ENCODE measurements at regions of chr5 and their contacts with region 1.

Region 1: DNA sequence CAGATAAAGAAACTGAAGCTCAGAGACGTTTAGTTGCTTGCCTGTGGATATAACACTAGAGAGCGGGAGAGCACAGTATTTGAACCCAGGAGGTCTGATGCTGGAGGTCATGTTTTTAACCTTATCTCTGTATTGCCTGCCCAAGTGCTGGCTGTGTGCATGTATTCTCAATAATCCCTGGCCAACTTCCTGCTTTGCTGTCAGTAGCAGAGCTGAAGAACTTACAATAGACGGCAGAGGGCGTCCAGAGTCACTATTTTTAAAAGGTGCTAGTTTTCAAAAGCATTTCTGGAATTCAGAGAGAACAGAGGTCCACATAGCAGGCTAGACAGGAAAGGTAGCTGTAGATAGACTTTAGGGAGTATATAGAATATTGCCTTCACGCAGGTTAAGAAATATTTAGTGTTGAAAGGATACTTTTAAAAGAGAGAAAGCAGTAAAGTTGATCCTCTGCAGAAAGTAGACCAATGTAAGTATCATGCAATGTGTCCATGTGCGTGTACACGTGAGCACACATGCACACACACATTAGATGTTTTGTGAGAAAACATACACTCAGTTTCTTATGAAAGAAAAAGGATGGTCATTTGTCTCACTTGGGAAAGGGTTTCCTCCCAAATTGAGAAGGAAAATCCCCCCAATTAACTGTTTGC is 46.3 kb downstream of the PTCD2 start:
- DNase-seq: peak; percentile 54
- ATAC-seq: peak; percentile 47
- H3K4me3 Mint-ChIP-seq: no peak overlapping the region
- H3K27ac Mint-ChIP-seq: no peak overlapping the region
- H3K4me1 Mint-ChIP-seq: no peaks in the 10 kb centered on the region
- H3K27me3 Mint-ChIP-seq: no peaks in the 10 kb centered on the region
- CTCF ChIP-seq: peak; percentile 61

Region 2: GRCh38 chr5:72355706-72356299 is 10.6 kb before region 1 on chr5:
- CTCF ChIA-PET with region 1: interaction called, 10 read pairs
- POLR2A ChIA-PET with region 1: no interaction called
- intact Hi-C with region 1: no loop called
- DNase-seq: no peak
- ATAC-seq: no peak
- H3K4me3 Mint-ChIP-seq: no peak overlapping the region
- H3K27ac Mint-ChIP-seq: no peak overlapping the region
- H3K4me1 Mint-ChIP-seq: no peaks in the 10 kb centered on the region
- H3K27me3 Mint-ChIP-seq: no peaks in the 10 kb centered on the region
- CTCF ChIP-seq: no peak

Region 3: GRCh38 chr5:72523960-72524582 is 157.6 kb after region 1 on chr5:
- CTCF ChIA-PET with region 1: interaction called, 11 read pairs
- POLR2A ChIA-PET with region 1: no interaction called
- intact Hi-C with region 1: no loop called
- DNase-seq: no peak
- ATAC-seq: no peak
- H3K4me3 Mint-ChIP-seq: no peak overlapping the region
- H3K27ac Mint-ChIP-seq: no peak overlapping the region
- H3K4me1 Mint-ChIP-seq: no peaks in the 10 kb centered on the region
- H3K27me3 Mint-ChIP-seq: peaks cover 4% of the 10 kb centered on the region
- CTCF ChIP-seq: peak; percentile 18